ENCODE measurements at regions of chr5 and their contacts with region 1.

Region 1: GRCh38 chr5:41856644-41857491 is 13.4 kb downstream of the OXCT1 start:
- DNase-seq: peak in 3 of 6 donors; percentile 28 to 59 (median 35)
- ATAC-seq: peak; percentile 70 to 98 (median 94)
- H3K4me3 ChIP-seq: no peak overlapping the region
- H3K27ac ChIP-seq: no peak overlapping the region
- H3K4me1 ChIP-seq: no peaks in the 10 kb centered on the region
- H3K27me3 ChIP-seq: no peaks in the 10 kb centered on the region
- CTCF ChIP-seq: peak; percentile 51 to 74 (median 69)

Region 2: DNA sequence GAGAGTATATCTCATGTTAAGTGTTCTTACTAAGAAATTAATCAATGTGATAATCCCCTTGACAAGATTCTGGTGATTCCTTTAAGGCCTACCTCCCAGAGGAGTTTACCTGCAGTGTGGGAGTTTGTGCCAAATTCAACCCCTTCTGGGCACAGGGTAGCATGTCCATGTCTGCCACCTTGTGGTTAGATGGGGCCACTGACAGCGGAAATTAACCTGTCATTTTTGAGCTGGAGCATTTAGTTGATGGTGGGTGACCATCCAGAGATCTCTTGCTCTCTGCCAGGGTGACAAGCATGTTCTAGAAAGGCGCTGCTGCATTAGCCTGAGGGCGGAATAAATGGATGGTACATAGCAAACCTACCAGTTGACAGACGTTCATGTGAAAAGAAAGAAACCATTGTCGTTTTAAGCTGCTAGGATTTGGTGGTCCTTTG is 200.4 kb after region 1 on chr5:
- intact Hi-C with region 1: loop called in 2 of 3 experiments (anchors 10 kb)
- DNase-seq: peak in 5 of 6 donors; percentile 27 to 59 (median 34)
- ATAC-seq: peak; percentile 79 to 90 (median 85)
- H3K4me3 ChIP-seq: no peak overlapping the region
- H3K27ac ChIP-seq: no peak overlapping the region
- H3K4me1 ChIP-seq: no peaks in the 10 kb centered on the region
- H3K27me3 ChIP-seq: peaks cover 0 to 3% (median 0%) of the 10 kb centered on the region in 4 donors
- CTCF ChIP-seq: peak; percentile 46 to 61 (median 58)

Region 3: DNA sequence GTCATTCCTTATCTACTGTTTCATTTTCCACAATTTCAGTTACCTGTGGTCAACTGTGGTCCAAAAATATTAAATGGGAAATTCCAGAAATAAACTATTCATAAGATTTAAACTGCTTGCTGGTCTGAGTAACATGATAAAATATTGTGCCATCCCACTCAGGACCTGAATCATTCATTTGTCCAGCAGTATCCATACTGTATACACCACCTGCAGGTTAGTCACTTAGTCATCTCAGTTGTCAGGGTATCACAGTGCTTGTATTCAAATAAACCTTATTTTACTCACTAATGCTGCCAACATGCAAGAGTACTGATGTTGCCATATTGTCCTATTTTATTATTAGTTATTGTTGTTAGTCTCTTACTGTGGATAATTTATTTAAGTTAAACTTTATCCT is 208.0 kb after region 1 on chr5:
- intact Hi-C with region 1: loop called in 1 of 3 experiments (anchors 10 kb)
- DNase-seq: no peak
- ATAC-seq: no peak
- H3K4me3 ChIP-seq: no peak overlapping the region
- H3K27ac ChIP-seq: no peak overlapping the region
- H3K4me1 ChIP-seq: no peaks in the 10 kb centered on the region
- H3K27me3 ChIP-seq: no peaks in the 10 kb centered on the region
- CTCF ChIP-seq: no peak

Region 4: GRCh38 chr5:42089705-42090104 is 232.8 kb after region 1 on chr5:
- intact Hi-C with region 1: no loop called
- DNase-seq: no peak
- ATAC-seq: no peak
- H3K4me3 ChIP-seq: no peak overlapping the region
- H3K27ac ChIP-seq: no peak overlapping the region
- H3K4me1 ChIP-seq: no peaks in the 10 kb centered on the region
- H3K27me3 ChIP-seq: no peaks in the 10 kb centered on the region
- CTCF ChIP-seq: no peak

Measured in pancreas (tissue), 10 donors.